ENCODE measurements at regions of chr7 and their contacts with region 1.

Region 1: GRCh38 chr7:155205368-155206317 is 92.0 kb upstream of the INSIG1 start:
- DNase-seq: peak; percentile 96
- H3K4me3 ChIP-seq: peak overlapping the region in 7 of 8 donors; percentile 34 to 70 (median 42)
- H3K27ac ChIP-seq: peak overlapping the region; percentile 72 to 97 (median 90)
- H3K4me1 ChIP-seq: peaks cover 0 to 30% (median 15%) of the 10 kb centered on the region in 6 donors
- H3K27me3 ChIP-seq: no peaks in the 10 kb centered on the region
- CTCF ChIP-seq: peak in 1 of 11 experiments; percentile 25
- POLR2A ChIP-seq: peak in 1 of 3 donors; percentile 32

Region 2: DNA sequence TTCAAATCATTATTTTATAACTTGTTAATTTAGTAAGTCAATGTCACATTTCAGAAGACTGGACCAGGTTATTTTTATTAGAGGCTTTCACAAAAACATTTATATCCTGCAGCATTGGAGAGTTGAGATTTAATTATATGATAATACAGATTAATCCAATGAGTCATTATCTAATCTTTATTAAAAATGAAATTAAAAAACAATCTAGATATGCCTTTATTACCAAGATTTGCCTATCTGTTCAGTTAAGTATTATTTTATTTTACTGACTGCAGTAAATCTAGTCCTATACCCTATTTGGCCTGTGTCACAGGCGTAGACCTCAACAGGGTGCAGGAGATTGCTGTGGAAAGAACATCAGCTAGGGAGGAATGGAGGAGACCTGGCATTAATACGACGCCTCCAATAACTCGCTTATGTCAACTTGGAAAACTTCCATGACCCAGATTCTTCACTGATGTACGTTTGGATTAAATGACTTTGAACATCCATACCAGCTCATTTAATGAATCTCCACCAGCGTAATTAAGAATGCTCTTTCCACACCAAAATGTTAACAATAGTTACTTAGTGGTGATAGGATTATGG is 220.9 kb before region 1 on chr7:
- intact Hi-C with region 1: no loop called
- DNase-seq: no peak
- H3K4me3 ChIP-seq: no peak overlapping the region
- H3K27ac ChIP-seq: no peak overlapping the region
- H3K4me1 ChIP-seq: no peaks in the 10 kb centered on the region
- H3K27me3 ChIP-seq: no peaks in the 10 kb centered on the region
- CTCF ChIP-seq: no peak
- POLR2A ChIP-seq: no peak

Region 3: DNA sequence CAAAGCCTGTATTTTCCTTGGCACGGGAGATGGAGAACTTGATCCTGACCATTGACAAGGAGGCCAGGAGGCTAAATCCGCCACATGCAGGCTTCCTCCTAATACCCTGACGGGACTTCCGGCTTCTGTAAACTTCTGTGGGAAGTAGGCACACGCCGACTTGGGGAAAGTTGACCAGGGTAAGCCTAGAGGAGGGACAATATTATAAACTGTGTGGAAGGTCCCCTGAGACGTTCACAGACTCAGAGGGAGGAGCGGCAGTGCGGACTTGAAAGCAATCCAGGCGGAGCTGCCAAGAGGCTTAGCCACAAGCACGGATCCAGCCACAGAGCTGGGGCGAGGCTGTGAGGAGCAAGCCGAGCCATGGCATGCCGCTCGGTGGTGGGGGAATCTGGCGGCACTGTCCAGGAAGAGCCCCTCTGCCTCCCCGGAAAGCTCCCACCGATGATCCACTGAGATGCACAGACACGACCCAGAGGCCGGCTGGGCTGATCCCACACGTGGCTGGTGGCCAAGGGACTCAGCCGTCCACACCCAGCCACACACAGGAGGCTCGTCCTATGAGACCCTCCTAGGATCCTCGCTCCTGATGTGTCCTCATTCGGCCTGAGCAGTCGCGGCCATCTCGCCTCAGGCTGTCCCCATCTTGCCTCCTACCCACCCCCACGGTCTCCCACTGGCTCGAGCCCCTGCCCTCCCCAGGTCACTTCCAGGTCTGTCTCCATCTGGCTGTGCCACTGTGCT is 52.0 kb after region 1 on chr7:
- intact Hi-C with region 1: no loop called
- DNase-seq: no peak
- H3K4me3 ChIP-seq: no peak overlapping the region
- H3K27ac ChIP-seq: no peak overlapping the region
- H3K4me1 ChIP-seq: no peaks in the 10 kb centered on the region
- H3K27me3 ChIP-seq: peaks cover 0 to 34% (median 0%) of the 10 kb centered on the region in 7 donors
- CTCF ChIP-seq: no peak
- POLR2A ChIP-seq: no peak

Region 4: GRCh38 chr7:155298834-155299534 is 93.3 kb after region 1 on chr7:
- intact Hi-C with region 1: loop called (anchors 5 kb)
- DNase-seq: peak; percentile 99
- H3K4me3 ChIP-seq: peak overlapping the region; percentile 71 to 98 (median 91)
- H3K27ac ChIP-seq: peak overlapping the region; percentile 73 to 100 (median 98)
- H3K4me1 ChIP-seq: peaks cover 11 to 52% (median 38%) of the 10 kb centered on the region in 6 donors
- H3K27me3 ChIP-seq: no peaks in the 10 kb centered on the region
- CTCF ChIP-seq: peak in 7 of 11 experiments; percentile 10 to 47 (median 23)
- POLR2A ChIP-seq: peak in 1 of 3 donors; percentile 78